HepG2 (cell line): ENCODE measurements at regions of chr11 and their contacts with region 1.

Region 1: DNA sequence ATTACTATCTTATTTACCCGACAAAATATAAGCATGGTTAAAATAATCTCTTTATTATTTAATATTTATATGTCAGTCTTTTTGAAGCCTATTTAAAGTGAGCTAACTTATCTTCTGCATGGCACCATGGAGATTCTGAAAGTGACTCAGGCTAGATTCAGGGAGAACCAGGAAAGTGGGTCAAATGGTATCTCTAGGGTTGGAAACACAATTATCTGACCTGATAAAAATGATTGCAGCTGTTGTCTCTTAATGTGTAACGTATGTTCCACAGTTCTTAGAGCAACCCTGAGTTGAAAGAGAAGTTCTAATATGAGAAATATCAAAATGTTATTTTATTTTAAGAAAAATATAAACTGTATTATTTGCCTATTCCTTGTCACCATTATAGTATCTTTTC is 143.1 kb upstream of the CARD18 start:
- DNase-seq: no peak
- ATAC-seq: no peak
- H3K4me3 ChIP-seq: no peak overlapping the region
- H3K27ac ChIP-seq: no peak overlapping the region
- H3K4me1 ChIP-seq: no peaks in the 10 kb centered on the region
- H3K27me3 ChIP-seq: no peaks in the 10 kb centered on the region
- CTCF ChIP-seq: no peak
- EP300 ChIP-seq: no peak
- POLR2A ChIP-seq: no peak
- RAD21 ChIP-seq: no peak

Region 2: GRCh38 chr11:104076455-104076854 is 1206.2 kb before region 1 on chr11:
- CTCF ChIA-PET with region 1: no interaction called
- POLR2A ChIA-PET with region 1: no interaction called
- in situ Hi-C with region 1: no loop called
- intact Hi-C with region 1: loop called (anchors 5 kb)
- DNase-seq: no peak
- ATAC-seq: no peak
- H3K4me3 ChIP-seq: no peak overlapping the region
- H3K27ac ChIP-seq: no peak overlapping the region
- H3K4me1 ChIP-seq: no peaks in the 10 kb centered on the region
- H3K27me3 ChIP-seq: no peaks in the 10 kb centered on the region
- CTCF ChIP-seq: no peak
- EP300 ChIP-seq: no peak
- POLR2A ChIP-seq: no peak
- RAD21 ChIP-seq: no peak

Region 3: GRCh38 chr11:104320097-104320496 is 962.6 kb before region 1 on chr11:
- CTCF ChIA-PET with region 1: no interaction called
- POLR2A ChIA-PET with region 1: no interaction called
- in situ Hi-C with region 1: no loop called
- intact Hi-C with region 1: no loop called
- DNase-seq: no peak
- ATAC-seq: no peak
- H3K4me3 ChIP-seq: no peak overlapping the region
- H3K27ac ChIP-seq: no peak overlapping the region
- H3K4me1 ChIP-seq: no peaks in the 10 kb centered on the region
- H3K27me3 ChIP-seq: no peaks in the 10 kb centered on the region; a peak in 1 of 5 replicates
- CTCF ChIP-seq: no peak
- EP300 ChIP-seq: no peak
- POLR2A ChIP-seq: no peak
- RAD21 ChIP-seq: no peak

Region 4: DNA sequence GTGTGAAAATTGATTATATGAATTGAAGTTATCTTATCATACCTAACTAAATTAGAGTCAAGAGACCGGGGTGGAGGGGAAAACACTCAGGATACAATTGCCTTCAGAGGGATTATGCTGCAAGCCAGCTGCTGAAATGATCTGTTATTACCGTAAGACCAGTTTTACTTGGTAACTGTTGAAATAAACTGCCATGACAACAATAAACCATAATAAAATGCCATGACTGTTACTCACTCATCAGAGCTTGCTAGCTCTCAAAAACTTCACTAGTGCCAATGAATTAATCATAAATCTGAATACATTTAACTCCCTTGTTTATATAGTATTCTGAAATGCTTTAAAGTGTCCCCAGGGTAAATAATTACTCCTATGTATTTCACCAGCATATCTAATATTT is 452.6 kb before region 1 on chr11:
- CTCF ChIA-PET with region 1: no interaction called
- POLR2A ChIA-PET with region 1: no interaction called
- in situ Hi-C with region 1: no loop called
- intact Hi-C with region 1: no loop called
- DNase-seq: no peak
- ATAC-seq: no peak
- H3K4me3 ChIP-seq: no peak overlapping the region
- H3K27ac ChIP-seq: no peak overlapping the region
- H3K4me1 ChIP-seq: no peaks in the 10 kb centered on the region
- H3K27me3 ChIP-seq: no peaks in the 10 kb centered on the region
- CTCF ChIP-seq: no peak
- EP300 ChIP-seq: no peak
- POLR2A ChIP-seq: no peak
- RAD21 ChIP-seq: no peak